CD4-positive, alpha-beta T cell (primary cell): ENCODE measurements at regions of chr19 and their contacts with region 1.

Region 1: GRCh38 chr19:7925171-7925851 is 624 bp downstream of the CTXN1 start:
- DNase-seq: peak; percentile 62 to 90 (median 70)
- ATAC-seq: peak; percentile 19
- H3K4me3 ChIP-seq: no peak overlapping the region
- H3K4me3 Mint-ChIP-seq: peak overlapping the region; percentile 90
- H3K27ac ChIP-seq: no peak overlapping the region
- H3K27ac Mint-ChIP-seq: no peak overlapping the region
- H3K4me1 ChIP-seq: peaks cover 43% of the 10 kb centered on the region
- H3K4me1 Mint-ChIP-seq: peaks cover 23% of the 10 kb centered on the region
- H3K27me3 ChIP-seq: no peaks in the 10 kb centered on the region
- H3K27me3 Mint-ChIP-seq: no peaks in the 10 kb centered on the region
- CTCF ChIP-seq: peak; percentile 71

Region 2: DNA sequence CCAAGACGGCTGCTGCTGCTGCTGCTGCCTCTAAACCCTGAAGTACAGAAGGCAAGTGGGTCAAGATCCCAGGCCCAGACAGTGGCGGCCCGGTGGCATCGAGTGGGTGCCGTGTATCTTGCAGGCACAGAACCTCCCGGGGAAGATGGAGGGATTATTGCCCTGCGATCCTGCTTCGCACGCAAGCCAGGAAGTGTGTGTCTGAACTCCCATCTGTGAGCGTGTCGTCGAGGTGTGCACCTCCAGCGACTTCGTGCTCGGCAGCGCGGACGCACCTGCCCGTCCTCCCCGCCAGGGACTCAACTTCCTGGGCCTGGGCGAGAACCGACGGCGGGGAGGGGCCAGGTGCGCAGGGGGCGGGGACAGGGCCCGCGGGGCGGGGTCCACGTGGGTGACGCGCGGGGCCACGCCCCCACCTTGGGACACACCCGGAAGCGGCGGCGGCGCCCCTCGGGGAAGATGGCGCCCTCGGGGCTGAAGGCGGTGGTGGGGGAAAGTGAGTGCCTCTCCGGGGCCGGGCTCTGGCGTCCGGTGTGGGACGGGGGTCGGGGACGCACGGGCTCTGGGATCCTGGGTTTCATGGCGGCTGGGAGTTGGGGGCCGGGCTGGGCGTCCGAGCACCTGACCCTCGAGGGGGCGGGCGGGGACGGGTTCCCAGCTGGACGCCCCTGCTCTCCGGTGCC is 288.5 kb before region 1 on chr19 and contains the start of gene STXBP2:
- CTCF ChIA-PET with region 1: no interaction called
- POLR2A ChIA-PET with region 1: no interaction called
- intact Hi-C with region 1: loop called in 1 of 2 experiments (anchors 5 kb)
- DNase-seq: peak; percentile 90 to 97 (median 95)
- ATAC-seq: peak; percentile 97
- H3K4me3 ChIP-seq: peak within 1 kb of the TSS; percentile 86
- H3K4me3 Mint-ChIP-seq: peak within 1 kb of the TSS; percentile 90
- H3K27ac ChIP-seq: peak within 1 kb of the TSS; percentile 76 to 91
- H3K27ac Mint-ChIP-seq: peak within 1 kb of the TSS; percentile 90
- H3K4me1 ChIP-seq: peaks cover 43% of the 10 kb centered on the region
- H3K4me1 Mint-ChIP-seq: peaks cover 36% of the 10 kb centered on the region
- H3K27me3 ChIP-seq: no peaks in the 10 kb centered on the region
- H3K27me3 Mint-ChIP-seq: no peaks in the 10 kb centered on the region
- CTCF ChIP-seq: no peak
- total RNA-seq, gene STXBP2: 234 to 241 TPM

Region 3: DNA sequence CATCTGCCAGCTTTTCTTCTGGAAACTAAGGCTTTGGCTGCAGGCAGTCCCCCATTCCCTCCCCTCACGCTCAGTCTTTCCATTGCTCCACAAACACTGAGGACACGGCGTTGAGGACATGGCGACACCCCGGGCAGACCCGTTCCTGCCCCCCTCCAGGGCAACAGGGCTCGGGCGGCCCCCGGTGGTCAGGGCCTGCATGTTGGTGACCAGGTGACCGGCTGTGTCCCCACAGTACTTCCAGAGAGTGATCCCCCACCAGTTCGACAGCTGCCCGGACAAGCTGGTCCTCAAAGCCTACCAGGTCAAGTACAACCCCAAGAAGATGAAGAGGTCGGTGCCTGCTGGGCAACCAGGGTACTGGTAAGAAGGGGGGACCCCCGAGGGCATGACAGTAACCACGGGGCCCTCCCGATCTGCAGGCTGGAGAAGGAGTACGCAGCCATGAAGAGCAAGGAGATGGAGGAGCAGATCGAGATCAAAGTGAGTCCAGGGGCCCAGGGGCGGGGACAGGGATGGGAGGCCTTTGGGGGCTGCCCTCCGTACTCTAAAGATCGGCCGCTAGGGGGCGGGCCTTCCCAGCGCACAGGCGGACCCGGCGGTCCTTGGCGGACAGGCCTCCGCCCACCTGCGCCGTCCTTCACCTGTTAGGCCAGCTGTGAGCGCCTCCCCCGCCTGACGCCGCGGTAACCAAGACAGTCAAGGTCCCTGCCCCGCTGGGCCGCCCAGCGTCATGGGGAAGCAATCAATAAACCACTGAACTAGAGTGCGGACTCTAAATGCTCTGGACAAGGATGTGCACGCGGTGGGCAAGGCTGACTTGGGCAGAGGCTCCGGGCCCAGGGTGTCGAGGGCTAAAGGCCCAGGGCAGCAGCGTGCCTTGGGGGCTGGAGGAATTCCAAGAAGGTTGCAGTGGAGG is 72.2 kb before region 1 on chr19:
- CTCF ChIA-PET with region 1: interaction called, 4 read pairs
- POLR2A ChIA-PET with region 1: interaction called, 5 read pairs
- intact Hi-C with region 1: loop called (anchors 1 to 2 kb)
- DNase-seq: peak; percentile 45 to 81 (median 58)
- ATAC-seq: peak; percentile 72
- H3K4me3 ChIP-seq: no peak overlapping the region
- H3K4me3 Mint-ChIP-seq: no peak overlapping the region
- H3K27ac ChIP-seq: no peak overlapping the region
- H3K27ac Mint-ChIP-seq: no peak overlapping the region
- H3K4me1 ChIP-seq: peaks cover 9% of the 10 kb centered on the region
- H3K4me1 Mint-ChIP-seq: no peaks in the 10 kb centered on the region
- H3K27me3 ChIP-seq: peaks cover 0 to 8% of the 10 kb centered on the region in 2 experiments
- H3K27me3 Mint-ChIP-seq: peaks cover 3% of the 10 kb centered on the region
- CTCF ChIP-seq: peak; percentile 92

Region 4: GRCh38 chr19:8141726-8142512 is 216.6 kb after region 1 on chr19:
- CTCF ChIA-PET with region 1: no interaction called
- POLR2A ChIA-PET with region 1: no interaction called
- intact Hi-C with region 1: no loop called
- DNase-seq: no peak
- ATAC-seq: no peak
- H3K4me3 ChIP-seq: no peak overlapping the region
- H3K4me3 Mint-ChIP-seq: no peak overlapping the region
- H3K27ac ChIP-seq: no peak overlapping the region
- H3K27ac Mint-ChIP-seq: no peak overlapping the region
- H3K4me1 ChIP-seq: no peaks in the 10 kb centered on the region
- H3K4me1 Mint-ChIP-seq: no peaks in the 10 kb centered on the region
- H3K27me3 ChIP-seq: peaks cover 0 to 5% of the 10 kb centered on the region in 2 experiments
- H3K27me3 Mint-ChIP-seq: peaks cover 12% of the 10 kb centered on the region
- CTCF ChIP-seq: no peak